ENCODE measurements at regions of chr7 and their contacts with region 1.

Region 1: GRCh38 chr7:47669061-47669891 is 87.4 kb upstream of the TNS3 start:
- DNase-seq: peak; percentile 92
- ATAC-seq: peak; percentile 71
- H3K4me3 ChIP-seq: peak overlapping the region in 3 of 5 experiments; percentile 7 to 23 (median 21)
- H3K4me3 Mint-ChIP-seq: peak overlapping the region; percentile 74
- H3K27ac ChIP-seq: peak overlapping the region; percentile 88 to 90
- H3K27ac Mint-ChIP-seq: peak overlapping the region; percentile 98
- H3K4me1 ChIP-seq: peaks cover 50 to 69% of the 10 kb centered on the region in 2 donors
- H3K4me1 Mint-ChIP-seq: peaks cover 57% of the 10 kb centered on the region
- H3K27me3 ChIP-seq: no peaks in the 10 kb centered on the region
- H3K27me3 Mint-ChIP-seq: no peaks in the 10 kb centered on the region
- CTCF ChIP-seq: no peak

Region 2: GRCh38 chr7:47482013-47482875 is 187.0 kb before region 1 on chr7:
- CTCF ChIA-PET with region 1: interaction called, 3 read pairs
- POLR2A ChIA-PET with region 1: interaction called, 6 read pairs
- intact Hi-C with region 1: loop called (anchors 1 kb)
- DNase-seq: no peak
- ATAC-seq: peak; percentile 60
- H3K4me3 ChIP-seq: no peak overlapping the region
- H3K4me3 Mint-ChIP-seq: peak overlapping the region; percentile 72
- H3K27ac ChIP-seq: no peak overlapping the region
- H3K27ac Mint-ChIP-seq: peak overlapping the region; percentile 87
- H3K4me1 ChIP-seq: peaks cover 39 to 44% of the 10 kb centered on the region in 2 donors
- H3K4me1 Mint-ChIP-seq: peaks cover 64% of the 10 kb centered on the region
- H3K27me3 ChIP-seq: no peaks in the 10 kb centered on the region
- H3K27me3 Mint-ChIP-seq: no peaks in the 10 kb centered on the region
- CTCF ChIP-seq: no peak

Region 3: GRCh38 chr7:47581806-47582763 is 87.2 kb before region 1 on chr7 and contains the start of gene TNS3:
- CTCF ChIA-PET with region 1: interaction called, 11 read pairs
- POLR2A ChIA-PET with region 1: interaction called, 11 read pairs
- intact Hi-C with region 1: no loop called
- DNase-seq: peak; percentile 76
- ATAC-seq: peak; percentile 80
- H3K4me3 ChIP-seq: peak within 1 kb of the TSS; percentile 58 to 75 (median 70)
- H3K4me3 Mint-ChIP-seq: peak within 1 kb of the TSS; percentile 83
- H3K27ac ChIP-seq: peak within 1 kb of the TSS; percentile 13 to 40
- H3K27ac Mint-ChIP-seq: peak within 1 kb of the TSS; percentile 90
- H3K4me1 ChIP-seq: peaks cover 37 to 55% of the 10 kb centered on the region in 2 donors
- H3K4me1 Mint-ChIP-seq: peaks cover 61% of the 10 kb centered on the region
- H3K27me3 ChIP-seq: peaks cover 0 to 8% (median 0%) of the 10 kb centered on the region in 4 experiments
- H3K27me3 Mint-ChIP-seq: no peaks in the 10 kb centered on the region
- CTCF ChIP-seq: peak; percentile 33
- total RNA-seq, gene TNS3: 70.1 and 77.5 TPM in 2 replicates

Region 4: GRCh38 chr7:47647181-47647917 is 21.9 kb before region 1 on chr7:
- CTCF ChIA-PET with region 1: interaction called, 7 read pairs
- POLR2A ChIA-PET with region 1: interaction called, 10 read pairs
- intact Hi-C with region 1: loop called (anchors 1 kb)
- DNase-seq: peak; percentile 59
- ATAC-seq: peak; percentile 93
- H3K4me3 ChIP-seq: peak overlapping the region in 2 of 5 experiments; percentile 4 to 47
- H3K4me3 Mint-ChIP-seq: peak overlapping the region; percentile 76
- H3K27ac ChIP-seq: peak overlapping the region; percentile 3 to 16
- H3K27ac Mint-ChIP-seq: peak overlapping the region; percentile 89
- H3K4me1 ChIP-seq: peaks cover 22 to 34% of the 10 kb centered on the region in 2 donors
- H3K4me1 Mint-ChIP-seq: peaks cover 39% of the 10 kb centered on the region
- H3K27me3 ChIP-seq: no peaks in the 10 kb centered on the region
- H3K27me3 Mint-ChIP-seq: no peaks in the 10 kb centered on the region
- CTCF ChIP-seq: no peak

Region 5: GRCh38 chr7:47763063-47763974 is 94.0 kb after region 1 on chr7:
- CTCF ChIA-PET with region 1: interaction called, 3 read pairs
- POLR2A ChIA-PET with region 1: interaction called, 5 read pairs
- intact Hi-C with region 1: loop called (anchors 1 kb)
- DNase-seq: peak; percentile 32
- ATAC-seq: peak; percentile 91
- H3K4me3 ChIP-seq: peak overlapping the region in 2 of 5 experiments; percentile 16 to 21
- H3K4me3 Mint-ChIP-seq: peak overlapping the region; percentile 75
- H3K27ac ChIP-seq: peak overlapping the region; percentile 44 to 53
- H3K27ac Mint-ChIP-seq: peak overlapping the region; percentile 90
- H3K4me1 ChIP-seq: peaks cover 11% of the 10 kb centered on the region in 2 donors
- H3K4me1 Mint-ChIP-seq: peaks cover 45% of the 10 kb centered on the region
- H3K27me3 ChIP-seq: no peaks in the 10 kb centered on the region
- H3K27me3 Mint-ChIP-seq: no peaks in the 10 kb centered on the region
- CTCF ChIP-seq: no peak

Region 6: GRCh38 chr7:48088559-48089045 is 419.3 kb after region 1 on chr7:
- CTCF ChIA-PET with region 1: no interaction called
- POLR2A ChIA-PET with region 1: no interaction called
- intact Hi-C with region 1: loop called (anchors 2 kb)
- DNase-seq: no peak
- ATAC-seq: no peak
- H3K4me3 ChIP-seq: peak overlapping the region; percentile 53 to 81 (median 73)
- H3K4me3 Mint-ChIP-seq: peak overlapping the region; percentile 94
- H3K27ac ChIP-seq: peak overlapping the region; percentile 56 to 73
- H3K27ac Mint-ChIP-seq: peak overlapping the region; percentile 82
- H3K4me1 ChIP-seq: peaks cover 15 to 40% of the 10 kb centered on the region in 2 donors
- H3K4me1 Mint-ChIP-seq: peaks cover 43% of the 10 kb centered on the region
- H3K27me3 ChIP-seq: no peaks in the 10 kb centered on the region
- H3K27me3 Mint-ChIP-seq: no peaks in the 10 kb centered on the region
- CTCF ChIP-seq: no peak